Esophagus muscularis mucosa (tissue), 4 donors: ENCODE measurements at regions of chr3 and their contacts with region 1.

Region 1: GRCh38 chr3:187164885-187165543 is 25.7 kb upstream of the RPL39L start:
- DNase-seq: no peak
- H3K4me3 ChIP-seq: no peak overlapping the region
- H3K27ac ChIP-seq: no peak overlapping the region
- H3K4me1 ChIP-seq: peaks cover 0 to 16% (median 13%) of the 10 kb centered on the region in 4 donors
- H3K27me3 ChIP-seq: no peaks in the 10 kb centered on the region
- CTCF ChIP-seq: peak; percentile 65 to 77 (median 74)
- EP300 ChIP-seq: no peak
- POLR2A ChIP-seq: no peak

Region 2: DNA sequence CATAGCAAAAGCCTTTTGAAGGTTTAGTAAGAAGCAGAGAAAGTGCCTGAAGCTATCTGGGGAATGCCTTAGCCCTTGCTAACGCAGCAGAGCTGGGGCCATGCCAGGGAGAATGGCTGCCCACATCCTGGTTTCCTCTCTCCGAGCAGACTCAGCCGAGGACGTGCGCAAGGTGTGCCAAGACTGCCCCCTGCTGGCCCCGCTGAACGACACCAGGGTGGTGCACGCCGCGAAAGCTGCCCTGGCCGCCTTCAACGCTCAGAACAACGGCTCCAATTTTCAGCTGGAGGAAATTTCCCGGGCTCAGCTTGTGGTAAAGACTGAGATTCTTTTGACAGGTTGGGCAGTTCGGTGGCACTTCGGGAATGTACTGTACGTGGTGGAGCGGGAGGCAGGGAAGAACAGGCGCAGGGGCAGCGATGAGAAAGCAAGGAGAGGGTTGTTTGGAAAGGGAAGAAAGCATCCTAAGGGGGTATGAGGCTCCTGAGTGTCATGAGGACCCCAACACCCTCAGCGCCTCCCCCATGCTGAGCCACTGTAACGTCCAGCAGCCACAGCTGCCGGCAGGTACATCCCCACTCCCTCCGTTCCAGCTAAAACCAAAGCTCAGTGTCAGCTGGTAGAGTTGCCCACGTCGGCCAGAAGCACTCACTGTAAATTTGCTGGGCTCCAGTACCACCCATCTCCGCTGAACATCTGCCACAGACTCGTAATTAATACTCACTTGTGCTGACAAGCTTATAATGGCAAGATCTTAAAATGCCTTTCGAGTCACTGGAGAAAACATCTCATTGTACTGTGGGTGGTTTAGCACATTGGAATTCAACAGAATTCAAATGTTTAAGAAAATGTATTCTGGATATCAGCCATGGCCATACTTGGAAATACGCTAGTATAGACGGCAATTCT is 547.7 kb before region 1 on chr3:
- intact Hi-C with region 1: loop called (anchors 10 kb)
- DNase-seq: no peak
- H3K4me3 ChIP-seq: peak overlapping the region in 3 of 4 donors; percentile 6 to 32 (median 22)
- H3K27ac ChIP-seq: no peak overlapping the region
- H3K4me1 ChIP-seq: peaks cover 0 to 18% (median 12%) of the 10 kb centered on the region in 4 donors
- H3K27me3 ChIP-seq: peaks cover 0 to 57% (median 0%) of the 10 kb centered on the region in 4 donors
- CTCF ChIP-seq: peak; percentile 83 to 92 (median 87)
- EP300 ChIP-seq: no peak
- POLR2A ChIP-seq: no peak

Region 3: GRCh38 chr3:186852994-186853393 is 312.0 kb before region 1 on chr3:
- intact Hi-C with region 1: loop called (anchors 5 kb)
- DNase-seq: peak; percentile 91
- H3K4me3 ChIP-seq: no peak overlapping the region
- H3K27ac ChIP-seq: no peak overlapping the region
- H3K4me1 ChIP-seq: no peaks in the 10 kb centered on the region
- H3K27me3 ChIP-seq: no peaks in the 10 kb centered on the region
- CTCF ChIP-seq: no peak
- EP300 ChIP-seq: no peak
- POLR2A ChIP-seq: no peak

Region 4: DNA sequence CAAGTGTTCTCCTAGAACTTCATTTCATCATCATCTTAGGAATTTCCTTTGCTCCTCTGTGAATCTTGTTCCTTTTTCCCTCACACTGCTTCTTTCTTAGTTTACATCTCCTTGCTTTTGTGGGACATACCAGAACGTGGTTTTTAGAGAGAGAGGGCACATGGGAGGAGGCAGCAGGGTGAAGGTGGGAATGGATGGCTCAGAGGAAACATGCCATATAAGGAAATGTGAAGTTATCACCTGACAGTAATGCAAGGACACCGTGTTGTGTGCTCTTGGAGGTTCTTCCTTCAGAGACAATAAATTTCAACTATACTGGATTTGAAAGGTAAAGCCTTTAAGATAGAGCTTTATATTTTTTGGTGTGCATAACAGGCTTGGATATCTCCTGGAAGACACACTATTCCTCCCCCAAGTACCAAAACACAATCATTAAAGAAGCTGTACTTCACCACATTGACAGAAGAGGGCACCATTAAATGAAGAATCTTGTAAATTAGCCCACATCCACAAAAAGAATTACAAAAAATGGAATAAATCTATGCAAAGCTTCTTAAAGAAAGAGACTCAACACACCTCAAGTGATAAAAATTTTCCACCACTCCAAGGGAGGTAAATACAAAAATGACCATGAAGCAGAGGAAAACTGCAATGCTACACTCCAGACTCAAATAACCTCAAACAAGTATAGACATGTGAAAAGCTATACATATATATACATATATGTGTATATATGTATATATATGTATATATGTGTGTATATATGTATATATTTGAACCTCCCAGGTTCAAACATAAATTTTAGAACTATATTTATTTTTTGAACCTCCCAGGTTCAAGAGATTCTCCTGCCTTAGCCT is 51.9 kb before region 1 on chr3:
- intact Hi-C with region 1: loop called (anchors 5 kb)
- DNase-seq: no peak
- H3K4me3 ChIP-seq: no peak overlapping the region
- H3K27ac ChIP-seq: no peak overlapping the region
- H3K4me1 ChIP-seq: no peaks in the 10 kb centered on the region
- H3K27me3 ChIP-seq: no peaks in the 10 kb centered on the region
- CTCF ChIP-seq: peak; percentile 36 to 65 (median 56)
- EP300 ChIP-seq: no peak
- POLR2A ChIP-seq: no peak